ENCODE measurements at regions of chr17 and their contacts with region 1.

Region 1: DNA sequence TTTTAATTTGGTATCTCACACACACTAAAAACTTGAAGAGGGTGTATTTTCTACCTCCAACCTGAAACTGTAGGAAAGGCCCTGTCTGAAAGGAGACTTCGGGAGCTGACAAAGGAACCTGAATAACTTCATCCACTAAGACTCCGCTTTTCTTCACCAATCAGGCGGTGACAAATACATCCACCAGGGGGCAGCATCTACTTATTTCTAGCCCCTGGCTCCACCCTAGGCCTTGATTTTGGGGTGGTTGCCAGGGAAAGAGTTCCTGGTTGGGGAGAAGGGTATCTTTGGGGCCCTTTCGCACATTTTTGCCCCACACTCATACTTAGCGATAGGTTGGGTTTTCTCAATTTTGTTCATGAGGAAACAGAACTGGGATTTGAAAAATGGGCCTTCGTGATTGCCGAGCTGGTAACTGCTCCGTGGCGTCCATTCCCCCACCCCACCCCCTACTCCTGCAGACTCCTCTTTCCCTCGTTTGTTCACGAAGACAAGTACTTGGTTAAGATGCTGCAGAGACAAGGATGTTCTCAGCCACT is 4.8 kb upstream of the ARL4D start:
- DNase-seq: peak; percentile 94
- H3K4me3 Mint-ChIP-seq: no peak overlapping the region
- H3K27ac Mint-ChIP-seq: peak overlapping the region; percentile 46
- H3K4me1 Mint-ChIP-seq: peaks cover 39% of the 10 kb centered on the region
- H3K27me3 Mint-ChIP-seq: no peaks in the 10 kb centered on the region

Region 2: DNA sequence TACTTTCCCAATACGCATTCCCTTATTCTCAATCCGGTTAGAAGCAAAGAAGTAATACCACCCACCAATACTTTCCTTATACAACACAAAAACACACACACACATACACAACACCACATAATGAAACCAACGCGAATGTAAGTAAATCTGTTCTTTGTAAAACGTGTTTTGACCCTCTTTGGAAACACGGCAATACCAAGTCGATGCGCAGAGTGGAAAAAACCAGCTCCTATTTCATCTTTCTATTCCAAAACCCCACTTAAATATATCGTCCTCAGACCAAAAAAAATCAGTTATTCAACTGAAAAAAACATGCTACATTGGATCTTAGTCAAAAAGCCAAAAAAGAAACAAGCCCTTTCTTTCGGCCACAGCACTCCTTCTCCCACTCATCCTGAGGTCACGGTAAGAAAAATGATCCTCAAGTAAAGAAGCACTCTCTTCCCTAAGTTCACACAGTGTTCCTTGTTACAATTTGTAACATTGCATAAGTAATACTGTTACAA is 26.2 kb before region 1 on chr17:
- CTCF ChIA-PET with region 1: interaction called, 13 read pairs
- POLR2A ChIA-PET with region 1: interaction called, 9 read pairs
- DNase-seq: peak; percentile 71
- H3K4me3 Mint-ChIP-seq: peak overlapping the region; percentile 97
- H3K27ac Mint-ChIP-seq: peak overlapping the region; percentile 100
- H3K4me1 Mint-ChIP-seq: peaks cover 55% of the 10 kb centered on the region
- H3K27me3 Mint-ChIP-seq: no peaks in the 10 kb centered on the region